ENCODE measurements at regions of chr20 and their contacts with region 1.

Region 1: GRCh38 chr20:45771182-45771759 is 20.4 kb downstream of the WFDC3 start:
- DNase-seq: peak; percentile 68
- H3K4me3 ChIP-seq: no peak overlapping the region
- H3K27ac ChIP-seq: peak overlapping the region; percentile 39
- H3K27me3 ChIP-seq: peaks cover 23% of the 10 kb centered on the region
- CTCF ChIP-seq: peak; percentile 95

Region 2: DNA sequence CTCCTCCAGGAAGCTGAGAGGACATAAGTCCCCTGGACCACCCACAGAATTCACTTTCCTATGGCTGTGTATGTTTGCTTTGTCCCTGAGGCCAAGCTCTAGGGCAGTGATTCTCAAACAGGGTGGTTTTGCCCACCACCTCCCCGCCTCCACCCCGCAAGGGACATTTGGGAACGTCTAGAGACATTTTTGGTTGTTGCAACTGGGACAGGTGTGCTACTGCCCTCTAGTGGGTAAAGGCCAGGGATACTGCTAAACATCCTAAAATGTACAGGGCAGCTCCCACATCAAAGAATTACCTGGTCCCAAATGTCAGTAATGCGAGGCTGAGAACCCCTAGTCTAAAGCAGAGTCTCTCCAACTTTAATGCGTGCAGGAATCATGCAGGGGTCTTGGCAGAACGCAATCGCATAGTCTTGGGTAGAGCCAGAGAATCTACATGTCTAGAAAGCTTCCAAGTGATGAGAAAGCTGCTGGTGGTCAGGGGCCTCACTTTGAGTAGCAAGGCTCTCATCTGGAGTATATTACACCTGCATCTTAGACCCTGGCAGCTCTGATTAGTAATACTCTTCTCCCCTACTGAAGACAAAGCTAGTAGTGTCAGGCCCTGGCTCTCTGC is 675.4 kb before region 1 on chr20:
- CTCF ChIA-PET with region 1: interaction called, 17 read pairs
- POLR2A ChIA-PET with region 1: no interaction called
- DNase-seq: no peak
- H3K4me3 ChIP-seq: no peak overlapping the region
- H3K27ac ChIP-seq: no peak overlapping the region
- H3K27me3 ChIP-seq: peaks cover 30% of the 10 kb centered on the region
- CTCF ChIP-seq: peak; percentile 83

Region 3: DNA sequence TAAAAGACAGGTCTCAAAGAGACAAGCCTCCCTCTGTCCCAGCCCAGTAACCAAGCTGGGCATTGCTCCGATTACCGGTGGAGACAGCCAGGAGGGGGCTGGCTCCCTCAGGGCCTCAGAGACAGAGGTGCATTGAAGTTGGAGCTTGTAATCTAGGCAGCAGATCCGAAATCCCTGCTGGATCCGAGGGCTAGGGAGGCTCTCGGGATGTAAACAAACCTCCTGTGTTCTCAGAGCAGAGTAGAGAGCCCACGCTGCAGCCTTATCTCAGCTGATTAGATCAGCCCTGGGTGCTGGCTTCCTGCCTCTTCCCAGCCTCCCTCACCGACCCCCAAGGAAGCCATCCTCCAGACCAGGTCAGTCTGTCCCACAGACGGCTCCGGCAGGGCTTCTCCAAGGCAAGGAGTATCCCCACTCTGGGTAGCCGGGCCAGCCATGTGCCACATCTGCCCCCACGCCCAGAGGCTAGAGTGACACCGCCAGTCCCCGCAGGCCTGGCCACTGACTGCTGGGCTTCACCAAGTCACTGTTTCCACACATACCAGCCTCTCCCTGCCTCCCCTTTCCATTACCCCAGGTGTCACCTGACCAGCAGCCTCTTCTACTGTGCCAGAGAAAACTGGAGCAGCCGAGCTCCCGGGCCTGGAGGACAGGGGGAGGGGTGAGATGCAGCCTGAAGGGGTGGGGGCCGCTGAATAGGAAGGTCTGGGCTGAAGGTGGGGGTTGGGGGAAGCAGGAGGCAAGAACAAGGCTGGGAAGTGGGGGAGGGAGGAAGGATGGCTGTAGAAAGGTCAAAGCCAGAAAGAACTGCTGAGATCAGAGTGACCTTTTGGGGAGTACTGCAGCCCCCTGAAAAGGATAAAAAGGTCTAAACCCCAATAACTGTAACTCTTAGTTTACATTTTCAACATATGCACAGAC is 429.1 kb before region 1 on chr20:
- CTCF ChIA-PET with region 1: interaction called, 19 read pairs
- POLR2A ChIA-PET with region 1: no interaction called
- DNase-seq: no peak
- H3K4me3 ChIP-seq: peak overlapping the region; percentile 97
- H3K27ac ChIP-seq: peak overlapping the region; percentile 85
- H3K27me3 ChIP-seq: no peaks in the 10 kb centered on the region
- CTCF ChIP-seq: no peak

Region 4: DNA sequence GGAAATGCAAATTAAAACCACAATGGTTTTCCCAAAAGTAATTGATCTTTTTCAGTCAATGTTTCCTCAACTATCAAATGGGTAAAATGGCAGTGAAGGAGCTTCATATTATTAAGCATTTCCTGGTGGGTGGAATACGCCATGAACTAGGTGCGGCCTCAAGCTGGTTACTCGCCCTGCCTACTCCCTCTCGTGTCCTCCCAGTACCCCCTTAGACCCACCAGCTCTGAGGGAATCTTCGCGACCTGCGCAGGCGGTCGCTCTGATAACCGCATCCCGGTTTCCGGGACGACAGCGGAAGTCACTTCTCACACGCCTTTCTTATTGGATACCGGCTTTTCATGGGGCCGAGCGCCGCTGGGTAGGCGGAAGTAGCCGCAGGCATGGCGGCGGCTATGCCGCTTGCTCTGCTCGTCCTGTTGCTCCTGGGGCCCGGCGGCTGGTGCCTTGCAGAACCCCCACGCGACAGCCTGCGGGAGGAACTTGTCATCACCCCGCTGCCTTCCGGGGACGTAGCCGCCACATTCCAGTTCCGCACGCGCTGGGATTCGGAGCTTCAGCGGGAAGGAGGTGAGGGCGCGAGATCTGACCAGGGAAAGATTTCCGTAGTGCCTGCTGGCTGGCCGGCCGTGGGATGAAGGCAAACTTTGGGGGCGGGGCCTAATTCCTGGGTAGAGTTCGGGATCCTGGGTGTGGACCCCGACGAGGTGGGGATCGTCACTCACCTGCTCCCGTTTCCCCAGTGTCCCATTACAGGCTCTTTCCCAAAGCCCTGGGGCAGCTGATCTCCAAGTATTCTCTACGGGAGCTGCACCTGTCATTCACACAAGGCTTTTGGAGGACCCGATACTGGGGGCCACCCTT is 355.3 kb before region 1 on chr20 and contains the start of gene PIGT:
- CTCF ChIA-PET with region 1: interaction called, 10 read pairs
- POLR2A ChIA-PET with region 1: no interaction called
- DNase-seq: no peak
- H3K4me3 ChIP-seq: peak within 1 kb of the TSS; percentile 93
- H3K27ac ChIP-seq: peak within 1 kb of the TSS; percentile 48
- H3K27me3 ChIP-seq: no peaks in the 10 kb centered on the region
- CTCF ChIP-seq: no peak
- polyA plus RNA-seq, gene PIGT: 114 and 140 TPM in 2 replicates

Region 5: GRCh38 chr20:45545754-45546453 is 225.4 kb before region 1 on chr20:
- CTCF ChIA-PET with region 1: interaction called, 13 read pairs
- POLR2A ChIA-PET with region 1: no interaction called
- DNase-seq: peak; percentile 1
- H3K4me3 ChIP-seq: no peak overlapping the region
- H3K27ac ChIP-seq: no peak overlapping the region
- H3K27me3 ChIP-seq: peaks cover 9% of the 10 kb centered on the region
- CTCF ChIP-seq: peak; percentile 52

Region 6: GRCh38 chr20:45745015-45745414 is 26.3 kb before region 1 on chr20:
- CTCF ChIA-PET with region 1: interaction called, 10 read pairs
- POLR2A ChIA-PET with region 1: no interaction called
- DNase-seq: no peak
- H3K4me3 ChIP-seq: no peak overlapping the region
- H3K27ac ChIP-seq: no peak overlapping the region
- H3K27me3 ChIP-seq: peaks cover 5% of the 10 kb centered on the region
- CTCF ChIP-seq: no peak

Region 7: GRCh38 chr20:46215913-46216707 is 444.8 kb after region 1 on chr20:
- CTCF ChIA-PET with region 1: no interaction called
- POLR2A ChIA-PET with region 1: no interaction called
- DNase-seq: no peak
- H3K4me3 ChIP-seq: no peak overlapping the region
- H3K27ac ChIP-seq: no peak overlapping the region
- H3K27me3 ChIP-seq: peaks cover 8% of the 10 kb centered on the region
- CTCF ChIP-seq: no peak